Activated CD4-positive, alpha-beta T cell treated with anti-CD3 and anti-CD28 coated beads, Interleukin-2, amount 10 ng/mL, durations not matched to agents 24 days and 14 days (primary cell): ENCODE measurements at regions of chr4 and their contacts with region 1.

Region 1: DNA sequence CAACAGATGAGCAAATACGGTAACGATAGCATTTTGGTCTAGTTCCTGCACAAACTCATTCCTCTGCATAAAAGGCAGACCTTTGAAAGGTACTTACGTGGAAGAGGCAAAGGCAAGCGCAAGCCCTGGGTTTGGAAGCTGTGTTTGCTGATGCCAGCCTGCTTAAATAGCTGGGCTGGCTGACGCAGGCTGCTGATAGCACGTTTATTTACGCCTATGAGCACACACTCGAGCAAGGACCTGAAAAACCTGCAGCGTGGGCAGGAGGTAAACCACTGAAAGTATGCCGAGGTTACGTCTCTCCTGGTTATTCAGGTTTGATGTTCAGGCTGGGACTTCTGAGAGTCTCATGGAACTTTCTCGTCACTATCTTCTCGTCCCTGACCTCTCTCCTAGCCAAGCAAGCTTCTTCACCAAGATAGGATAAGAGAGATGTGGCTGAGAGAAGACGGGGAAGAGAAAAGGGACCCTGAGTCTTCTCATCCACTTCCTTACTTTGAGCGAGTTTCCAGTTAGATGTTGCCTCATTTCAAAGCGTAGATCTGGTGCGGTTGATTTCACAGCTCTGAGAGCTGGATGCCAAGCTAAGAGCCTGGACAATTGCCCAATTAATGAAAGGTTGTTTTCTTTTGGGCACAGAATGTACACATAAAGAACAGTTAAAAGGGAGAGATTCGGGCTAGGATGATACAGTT is at the start of gene HOPX:
- DNase-seq: peak; percentile 80
- H3K4me3 Mint-ChIP-seq: peak within 1 kb of the TSS; percentile 52
- H3K27ac Mint-ChIP-seq: peak within 1 kb of the TSS; percentile 47
- H3K4me1 Mint-ChIP-seq: peaks cover 20% of the 10 kb centered on the region
- H3K27me3 Mint-ChIP-seq: peaks cover 53% of the 10 kb centered on the region
- total RNA-seq, gene HOPX: 86.3 and 88.5 TPM in 2 replicates

Region 2: GRCh38 chr4:56505269-56506130 is 175.8 kb before region 1 on chr4 and contains the start of gene ARL9:
- intact Hi-C with region 1: no loop called
- DNase-seq: peak; percentile 87
- H3K4me3 Mint-ChIP-seq: peak within 1 kb of the TSS; percentile 87
- H3K27ac Mint-ChIP-seq: peak within 1 kb of the TSS; percentile 60
- H3K4me1 Mint-ChIP-seq: peaks cover 15% of the 10 kb centered on the region
- H3K27me3 Mint-ChIP-seq: peaks cover 13% of the 10 kb centered on the region
- total RNA-seq, gene ARL9: 0.07 TPM in 1 of 2 replicates, not detected in the other

Region 3: DNA sequence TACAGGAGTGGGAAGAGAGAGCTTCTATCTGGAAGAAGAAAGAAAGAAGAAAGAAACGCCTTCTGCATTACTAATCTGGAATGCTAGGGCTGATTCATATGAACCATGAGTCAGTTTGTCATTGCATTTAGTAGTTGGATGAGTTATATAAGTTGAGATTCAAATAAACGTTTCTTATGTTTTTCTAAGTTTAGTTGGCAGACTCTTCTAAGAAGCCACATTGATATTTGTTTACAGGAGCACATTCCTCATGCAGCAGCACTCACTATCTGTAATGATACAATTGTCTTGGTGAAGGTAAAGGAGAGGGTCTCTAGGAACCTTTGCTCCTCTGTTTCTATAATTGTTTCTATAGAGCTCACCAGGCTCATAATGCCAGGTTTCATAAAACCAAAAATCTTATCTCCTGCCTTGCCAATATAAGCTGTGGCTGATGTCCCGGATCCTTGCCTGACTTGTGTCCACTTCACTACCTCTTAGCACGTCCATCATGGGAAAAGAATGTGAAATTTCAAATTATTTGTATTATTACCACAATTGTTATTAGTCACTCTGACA is 39.7 kb before region 1 on chr4:
- intact Hi-C with region 1: loop called (anchors 1 kb)
- DNase-seq: no peak
- H3K4me3 Mint-ChIP-seq: no peak overlapping the region
- H3K27ac Mint-ChIP-seq: peak overlapping the region; percentile 19
- H3K4me1 Mint-ChIP-seq: peaks cover 22% of the 10 kb centered on the region
- H3K27me3 Mint-ChIP-seq: no peaks in the 10 kb centered on the region

Region 4: DNA sequence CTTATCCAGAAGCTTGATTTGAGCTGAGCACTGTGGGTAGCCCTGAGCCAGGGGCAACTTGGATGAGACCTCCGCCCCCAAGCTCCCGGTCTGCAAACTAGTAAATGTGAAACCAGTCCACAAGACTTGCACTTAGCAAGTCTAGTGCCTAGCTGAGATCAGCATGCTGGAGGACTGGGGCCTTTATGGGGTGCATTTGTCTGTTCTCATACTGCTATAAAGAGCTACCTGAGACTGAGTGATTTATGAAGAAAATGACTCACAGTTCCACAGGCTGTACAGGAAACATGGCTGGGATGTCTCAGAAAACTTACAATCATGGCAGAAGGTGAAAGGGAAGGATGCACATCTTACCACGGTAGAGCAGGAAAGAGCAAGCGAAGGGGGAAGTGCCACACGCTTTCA is 41.9 kb after region 1 on chr4:
- intact Hi-C with region 1: loop called (anchors 2 kb)
- DNase-seq: peak; percentile 64
- H3K4me3 Mint-ChIP-seq: peak overlapping the region; percentile 9
- H3K27ac Mint-ChIP-seq: peak overlapping the region; percentile 78
- H3K4me1 Mint-ChIP-seq: peaks cover 16% of the 10 kb centered on the region
- H3K27me3 Mint-ChIP-seq: no peaks in the 10 kb centered on the region

Region 5: DNA sequence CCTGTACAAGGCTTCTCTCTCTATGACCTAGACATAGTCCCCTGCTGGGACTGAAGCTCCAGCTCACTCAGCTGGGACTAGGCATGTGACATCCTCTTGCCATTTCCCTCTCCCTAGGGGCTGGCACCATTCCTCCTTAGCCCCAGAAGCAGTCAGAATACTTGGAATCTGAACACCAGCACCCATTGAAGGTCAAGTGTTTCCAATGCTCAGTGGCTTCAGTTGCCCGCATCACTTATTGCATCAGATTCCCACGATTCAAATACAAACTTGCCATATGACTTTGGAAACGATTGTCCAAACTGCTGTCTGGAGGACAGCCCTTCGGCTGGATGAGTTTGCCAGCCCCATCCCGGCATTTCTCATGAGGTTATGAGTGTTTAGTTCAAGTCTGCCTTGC is 65.4 kb after region 1 on chr4:
- intact Hi-C with region 1: no loop called
- DNase-seq: no peak
- H3K4me3 Mint-ChIP-seq: no peak overlapping the region
- H3K27ac Mint-ChIP-seq: no peak overlapping the region
- H3K4me1 Mint-ChIP-seq: peaks cover 4% of the 10 kb centered on the region
- H3K27me3 Mint-ChIP-seq: no peaks in the 10 kb centered on the region

Region 6: GRCh38 chr4:56757821-56758411 is 76.6 kb after region 1 on chr4:
- intact Hi-C with region 1: loop called (anchors 5 kb)
- DNase-seq: peak; percentile 91
- H3K4me3 Mint-ChIP-seq: peak overlapping the region; percentile 80
- H3K27ac Mint-ChIP-seq: peak overlapping the region; percentile 98
- H3K4me1 Mint-ChIP-seq: peaks cover 47% of the 10 kb centered on the region
- H3K27me3 Mint-ChIP-seq: peaks cover 5% of the 10 kb centered on the region

Region 7: GRCh38 chr4:56821381-56822243 is 140.3 kb after region 1 on chr4 and contains the start of gene SPINK2:
- intact Hi-C with region 1: loop called (anchors 1 kb)
- DNase-seq: peak; percentile 86
- H3K4me3 Mint-ChIP-seq: peak within 1 kb of the TSS; percentile 72
- H3K27ac Mint-ChIP-seq: no peak within 1 kb of the TSS
- H3K4me1 Mint-ChIP-seq: peaks cover 33% of the 10 kb centered on the region
- H3K27me3 Mint-ChIP-seq: peaks cover 36% of the 10 kb centered on the region
- total RNA-seq, gene SPINK2: 0.37 and 0.54 TPM in 2 replicates

Region 8: DNA sequence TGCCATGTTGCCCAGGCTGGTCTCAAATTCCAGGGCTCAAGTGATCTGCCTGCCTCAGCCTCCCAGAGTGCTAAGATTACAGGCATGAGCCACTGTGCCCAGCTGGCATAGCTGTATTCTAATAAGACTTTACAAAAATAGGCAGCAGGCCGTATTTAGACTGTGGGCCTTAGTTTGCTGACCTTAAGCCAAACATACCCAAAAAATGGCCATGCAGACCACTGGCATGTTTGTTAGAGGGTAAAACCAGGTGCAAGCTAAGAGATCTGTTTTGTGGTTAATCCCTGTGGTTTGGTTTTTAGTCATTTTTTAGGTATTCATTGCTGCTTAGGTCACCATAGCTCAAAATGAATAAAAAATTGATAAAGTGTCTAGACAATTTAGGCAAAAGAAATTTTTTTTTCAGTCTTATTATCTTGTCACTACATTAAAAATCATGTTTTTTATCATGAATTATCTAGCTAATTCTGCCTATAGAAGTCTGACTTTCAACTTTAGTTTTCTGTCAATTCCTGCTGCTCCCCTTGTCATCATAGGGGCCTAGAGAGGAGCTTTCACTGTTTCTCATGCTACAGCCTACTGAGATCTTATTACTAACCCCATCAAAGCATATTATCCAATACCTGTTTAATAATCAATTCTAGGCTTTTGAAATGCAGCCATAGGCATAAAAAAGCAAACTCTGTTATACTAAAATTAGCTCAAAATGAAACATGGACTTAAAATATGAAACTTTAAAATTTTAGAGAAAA is 147.7 kb after region 1 on chr4:
- intact Hi-C with region 1: loop called (anchors 1 kb)
- DNase-seq: no peak
- H3K4me3 Mint-ChIP-seq: no peak overlapping the region
- H3K27ac Mint-ChIP-seq: peak overlapping the region; percentile 43
- H3K4me1 Mint-ChIP-seq: peaks cover 18% of the 10 kb centered on the region
- H3K27me3 Mint-ChIP-seq: peaks cover 11% of the 10 kb centered on the region